Caco-2 (cell line): ENCODE measurements at regions of chr12 and their contacts with region 1.

Region 1: GRCh38 chr12:7142056-7142644 is 12.0 kb downstream of the CLSTN3 start:
- DNase-seq: peak; percentile 75 to 81
- H3K4me3 ChIP-seq: no peak overlapping the region
- H3K4me3 Mint-ChIP-seq: no peak overlapping the region
- H3K27ac Mint-ChIP-seq: no peak overlapping the region
- H3K4me1 ChIP-seq: no peaks in the 10 kb centered on the region
- H3K4me1 Mint-ChIP-seq: no peaks in the 10 kb centered on the region
- H3K27me3 ChIP-seq: no peaks in the 10 kb centered on the region
- H3K27me3 Mint-ChIP-seq: no peaks in the 10 kb centered on the region
- CTCF ChIP-seq: peak; percentile 91 to 93

Region 2: DNA sequence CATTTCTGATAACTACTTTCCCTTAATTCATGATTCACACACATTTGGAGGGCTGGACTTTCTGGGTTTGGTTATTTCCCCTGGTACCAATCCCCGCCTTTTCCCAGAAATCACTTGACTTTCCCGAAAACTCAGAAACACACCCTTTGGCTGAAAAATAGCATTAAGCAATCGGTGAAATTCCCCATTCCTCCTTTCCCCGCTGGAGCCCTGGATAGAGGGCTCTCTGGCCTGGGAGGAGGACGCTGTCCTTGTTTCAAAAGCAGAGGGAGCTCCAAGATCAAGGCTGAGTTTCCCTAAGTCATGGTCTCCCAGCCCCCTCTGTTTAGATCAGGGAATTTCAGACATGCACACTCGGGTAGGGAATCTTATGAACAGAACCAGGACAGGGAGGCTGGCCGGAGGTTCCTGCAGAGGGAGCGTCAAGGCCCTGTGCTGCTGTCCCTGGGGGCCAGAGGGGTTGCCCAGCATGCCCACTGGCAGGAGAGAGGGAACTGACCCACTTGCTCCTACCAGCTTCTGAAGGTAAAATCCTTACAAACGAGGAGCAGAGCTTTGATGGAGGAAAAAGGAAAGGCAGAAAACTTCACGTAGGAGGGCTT is 81.7 kb before region 1 on chr12 and contains the start of gene C1S:
- CTCF ChIA-PET with region 1: interaction called, 6 read pairs
- POLR2A ChIA-PET with region 1: no interaction called
- intact Hi-C with region 1: loop called (anchors 1 kb)
- DNase-seq: peak; percentile 78 to 81
- H3K4me3 ChIP-seq: no peak within 1 kb of the TSS
- H3K4me3 Mint-ChIP-seq: no peak within 1 kb of the TSS
- H3K27ac Mint-ChIP-seq: peak within 1 kb of the TSS; percentile 38
- H3K4me1 ChIP-seq: peaks cover 20% of the 10 kb centered on the region
- H3K4me1 Mint-ChIP-seq: peaks cover 21% of the 10 kb centered on the region
- H3K27me3 ChIP-seq: no peaks in the 10 kb centered on the region
- H3K27me3 Mint-ChIP-seq: no peaks in the 10 kb centered on the region
- CTCF ChIP-seq: peak; percentile 80 to 86
- total RNA-seq, gene C1S: 5.3 and 6.1 TPM in 2 replicates

Region 3: GRCh38 chr12:7188562-7189397 is 46.6 kb after region 1 on chr12:
- CTCF ChIA-PET with region 1: interaction called, 5 read pairs
- POLR2A ChIA-PET with region 1: no interaction called
- intact Hi-C with region 1: loop called (anchors 1 kb)
- DNase-seq: peak; percentile 83 to 84
- H3K4me3 ChIP-seq: peak overlapping the region; percentile 96
- H3K4me3 Mint-ChIP-seq: peak overlapping the region; percentile 93
- H3K27ac Mint-ChIP-seq: peak overlapping the region; percentile 90
- H3K4me1 ChIP-seq: peaks cover 16% of the 10 kb centered on the region; the same call in 1 of the 2 replicates
- H3K4me1 Mint-ChIP-seq: peaks cover 21% of the 10 kb centered on the region
- H3K27me3 ChIP-seq: no peaks in the 10 kb centered on the region
- H3K27me3 Mint-ChIP-seq: peaks cover 8% of the 10 kb centered on the region
- CTCF ChIP-seq: peak; percentile 56 to 82